Natural killer cell (primary cell): ENCODE measurements at regions of chr12 and their contacts with region 1.

Region 1: GRCh38 chr12:96399919-96400797 is at the start of gene CDK17:
- DNase-seq: peak; percentile 85 to 96
- ATAC-seq: peak; percentile 65 to 82 (median 68)
- H3K4me3 ChIP-seq: peak within 1 kb of the TSS; percentile 99
- H3K4me3 Mint-ChIP-seq: peak within 1 kb of the TSS; percentile 97
- H3K27ac ChIP-seq: peak within 1 kb of the TSS; percentile 98
- H3K27ac Mint-ChIP-seq: peak within 1 kb of the TSS; percentile 93 to 99
- H3K4me1 ChIP-seq: peaks cover 8% of the 10 kb centered on the region
- H3K4me1 Mint-ChIP-seq: peaks cover 48 to 52% of the 10 kb centered on the region in 2 donors
- H3K27me3 ChIP-seq: no peaks in the 10 kb centered on the region
- H3K27me3 Mint-ChIP-seq: no peaks in the 10 kb centered on the region
- CTCF ChIP-seq: no peak
- total RNA-seq, gene CDK17: 199 to 234 (median 232) TPM

Region 2: DNA sequence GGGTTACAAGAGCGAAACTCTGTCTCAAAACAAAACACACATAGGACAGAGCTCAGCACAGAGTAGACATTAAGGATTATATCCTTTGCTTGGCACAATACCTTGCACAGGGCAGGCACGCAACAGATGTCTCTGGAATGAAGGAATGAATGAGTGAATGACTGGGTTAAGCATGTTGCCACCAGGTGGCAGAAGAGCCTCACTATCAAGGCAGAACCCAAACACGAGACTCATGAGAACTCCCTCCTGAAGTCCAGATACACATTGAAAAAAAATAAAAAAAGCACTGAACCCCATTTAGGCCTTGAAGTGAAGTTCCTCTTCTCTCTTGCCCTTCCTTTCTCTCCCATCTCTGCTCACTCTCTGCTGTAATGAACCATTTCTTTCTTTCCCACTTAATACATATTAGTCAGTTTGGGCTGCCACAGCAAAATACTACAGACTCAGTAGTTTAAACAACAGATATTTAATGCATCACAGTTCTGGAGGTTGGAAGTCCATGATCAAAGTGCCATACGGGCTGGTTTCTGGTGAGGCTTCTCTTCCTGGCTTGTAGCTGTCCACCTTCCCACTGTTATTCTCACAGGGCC is 338.2 kb before region 1 on chr12:
- intact Hi-C with region 1: loop called (anchors 5 kb)
- DNase-seq: peak; percentile 61 to 91
- ATAC-seq: peak; percentile 83 to 96 (median 92)
- H3K4me3 ChIP-seq: no peak overlapping the region
- H3K4me3 Mint-ChIP-seq: no peak overlapping the region
- H3K27ac ChIP-seq: no peak overlapping the region
- H3K27ac Mint-ChIP-seq: no peak overlapping the region
- H3K4me1 ChIP-seq: peaks cover 11% of the 10 kb centered on the region
- H3K4me1 Mint-ChIP-seq: peaks cover 26 to 29% of the 10 kb centered on the region in 2 donors
- H3K27me3 ChIP-seq: no peaks in the 10 kb centered on the region
- H3K27me3 Mint-ChIP-seq: peaks cover 3 to 8% of the 10 kb centered on the region in 2 donors
- CTCF ChIP-seq: peak; percentile 75

Region 3: GRCh38 chr12:96294831-96295230 is 105.3 kb before region 1 on chr12:
- intact Hi-C with region 1: loop called (anchors 5 kb)
- DNase-seq: peak in 1 of 2 donors; percentile 55
- ATAC-seq: peak in 1 of 3 donors; percentile 15
- H3K4me3 ChIP-seq: no peak overlapping the region
- H3K4me3 Mint-ChIP-seq: no peak overlapping the region
- H3K27ac ChIP-seq: no peak overlapping the region
- H3K27ac Mint-ChIP-seq: peak overlapping the region; percentile 19 to 66
- H3K4me1 ChIP-seq: no peaks in the 10 kb centered on the region
- H3K4me1 Mint-ChIP-seq: peaks cover 0 to 19% of the 10 kb centered on the region in 2 donors
- H3K27me3 ChIP-seq: no peaks in the 10 kb centered on the region
- H3K27me3 Mint-ChIP-seq: no peaks in the 10 kb centered on the region
- CTCF ChIP-seq: no peak

Region 4: GRCh38 chr12:96378319-96378718 is 21.8 kb before region 1 on chr12:
- intact Hi-C with region 1: loop called (anchors 1 kb)
- DNase-seq: peak in 1 of 2 donors; percentile 15
- ATAC-seq: no peak
- H3K4me3 ChIP-seq: no peak overlapping the region
- H3K4me3 Mint-ChIP-seq: peak overlapping the region; percentile 90
- H3K27ac ChIP-seq: peak overlapping the region; percentile 76
- H3K27ac Mint-ChIP-seq: peak overlapping the region; percentile 90
- H3K4me1 ChIP-seq: peaks cover 35% of the 10 kb centered on the region
- H3K4me1 Mint-ChIP-seq: peaks cover 72 to 76% of the 10 kb centered on the region in 2 donors
- H3K27me3 ChIP-seq: no peaks in the 10 kb centered on the region
- H3K27me3 Mint-ChIP-seq: no peaks in the 10 kb centered on the region
- CTCF ChIP-seq: no peak

Region 5: DNA sequence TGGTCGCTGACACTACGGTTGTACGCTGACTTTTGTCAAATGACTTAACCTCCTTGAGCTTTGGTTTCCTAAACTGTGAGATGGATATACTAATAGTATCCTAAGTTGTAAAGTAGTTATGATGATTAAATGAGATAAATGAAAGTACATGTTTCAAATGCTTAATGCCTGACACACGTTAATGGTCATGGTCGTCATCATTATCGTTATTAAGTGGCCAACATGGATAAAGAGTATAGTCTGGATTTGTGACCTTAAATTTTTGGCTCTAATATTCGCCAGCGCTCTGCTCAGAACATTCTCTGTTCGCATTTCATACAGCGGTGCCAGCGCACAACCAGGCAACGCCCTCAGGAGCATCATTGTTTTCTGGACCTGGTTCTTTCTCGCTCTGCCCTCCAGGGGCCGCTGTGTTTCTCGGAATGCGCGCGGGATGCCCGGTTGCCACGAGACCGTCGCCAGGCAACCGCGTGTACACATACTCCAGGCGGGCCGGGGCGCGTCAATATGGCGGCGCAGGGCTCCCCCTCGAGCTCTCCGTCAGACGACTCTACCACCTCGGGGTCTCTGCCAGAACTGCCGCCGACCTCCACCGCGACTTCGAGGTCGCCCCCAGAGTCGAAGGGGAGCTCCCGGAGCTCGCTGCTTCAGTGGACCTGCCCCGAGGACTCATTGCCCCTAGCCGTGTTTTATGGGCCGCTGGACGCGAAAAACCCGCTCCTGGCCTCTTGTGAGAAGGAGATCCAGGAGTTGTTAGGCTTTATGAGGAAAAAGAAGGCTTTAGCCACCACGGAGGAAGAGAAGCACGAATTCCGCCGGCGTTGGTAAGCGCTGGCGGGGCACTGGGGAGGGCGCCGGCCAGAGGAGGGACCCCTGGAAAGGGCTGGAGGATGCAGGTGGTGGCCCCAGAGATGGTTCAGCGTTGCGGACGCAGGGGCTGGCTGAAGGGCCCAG is 89.2 kb after region 1 on chr12 and contains the start of gene CFAP54:
- intact Hi-C with region 1: loop called (anchors 1 kb)
- DNase-seq: peak; percentile 96 to 99
- ATAC-seq: peak; percentile 94 to 96 (median 95)
- H3K4me3 ChIP-seq: peak within 1 kb of the TSS; percentile 61
- H3K4me3 Mint-ChIP-seq: peak within 1 kb of the TSS; percentile 90
- H3K27ac ChIP-seq: peak within 1 kb of the TSS; percentile 44
- H3K27ac Mint-ChIP-seq: peak within 1 kb of the TSS; percentile 88 to 93
- H3K4me1 ChIP-seq: peaks cover 23% of the 10 kb centered on the region
- H3K4me1 Mint-ChIP-seq: peaks cover 22 to 25% of the 10 kb centered on the region in 2 donors
- H3K27me3 ChIP-seq: no peaks in the 10 kb centered on the region
- H3K27me3 Mint-ChIP-seq: no peaks in the 10 kb centered on the region
- CTCF ChIP-seq: peak; percentile 82
- total RNA-seq, gene CFAP54: 0.56 to 1.5 (median 1.2) TPM

Region 6: GRCh38 chr12:96906849-96907670 is 506.9 kb after region 1 on chr12 and contains the start of gene NEDD1:
- intact Hi-C with region 1: loop called (anchors 5 kb)
- DNase-seq: peak; percentile 88 to 90
- ATAC-seq: peak; percentile 84 to 92 (median 87)
- H3K4me3 ChIP-seq: peak within 1 kb of the TSS; percentile 72
- H3K4me3 Mint-ChIP-seq: peak within 1 kb of the TSS; percentile 97
- H3K27ac ChIP-seq: peak within 1 kb of the TSS; percentile 89
- H3K27ac Mint-ChIP-seq: peak within 1 kb of the TSS; percentile 97 to 98
- H3K4me1 ChIP-seq: peaks cover 14% of the 10 kb centered on the region
- H3K4me1 Mint-ChIP-seq: peaks cover 45 to 48% of the 10 kb centered on the region in 2 donors
- H3K27me3 ChIP-seq: no peaks in the 10 kb centered on the region
- H3K27me3 Mint-ChIP-seq: peaks cover 0 to 3% of the 10 kb centered on the region in 2 donors
- CTCF ChIP-seq: no peak
- total RNA-seq, gene NEDD1: 26.4 to 30.6 (median 29.2) TPM